Endothelial cell of umbilical vein (primary cell): ENCODE measurements at regions of chr11 and their contacts with region 1.

Region 1: GRCh38 chr11:13955971-13956421 is 6.5 kb upstream of the SPON1 start:
- DNase-seq: peak; percentile 56
- H3K4me3 ChIP-seq: no peak overlapping the region
- H3K27ac ChIP-seq: no peak overlapping the region
- H3K4me1 ChIP-seq: no peaks in the 10 kb centered on the region
- H3K27me3 ChIP-seq: peaks cover 41 to 85% of the 10 kb centered on the region in 2 experiments
- CTCF ChIP-seq: peak; percentile 74 to 85
- POLR2A ChIP-seq: no peak

Region 2: DNA sequence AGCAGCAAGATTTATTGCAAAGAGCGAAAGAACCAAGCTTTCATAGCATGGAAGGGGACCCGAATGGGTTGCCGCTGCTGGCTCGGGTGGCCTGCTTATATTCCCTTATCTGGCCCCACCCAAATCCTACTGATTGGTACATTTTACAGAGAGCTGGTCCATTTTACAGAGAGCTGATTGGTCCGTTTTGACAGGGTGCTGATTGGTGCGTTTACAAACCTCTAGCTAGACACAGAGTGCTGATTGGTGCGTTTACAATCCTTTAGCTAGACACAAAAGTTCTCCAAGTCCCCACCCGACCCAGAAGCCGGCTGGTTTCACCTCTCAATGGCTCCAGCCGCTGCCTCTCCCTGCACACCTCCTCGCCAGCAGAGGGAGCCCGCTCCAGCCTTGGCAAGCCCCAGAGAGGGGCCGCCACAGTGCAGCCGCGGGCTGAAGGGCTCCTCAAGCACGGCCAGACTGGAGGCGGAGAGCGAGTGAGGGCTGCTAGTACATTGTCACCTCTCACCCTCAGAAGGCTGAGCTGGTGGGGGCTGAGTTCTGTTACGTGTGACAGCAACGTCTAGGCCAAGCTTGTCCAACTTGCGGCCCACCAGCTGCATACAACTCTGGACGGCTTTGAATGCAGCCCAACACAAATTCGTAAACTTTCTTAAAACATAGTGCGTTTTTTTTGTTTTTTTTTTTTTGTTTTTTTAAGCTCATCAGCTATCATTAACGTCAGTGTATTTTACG is 468.9 kb before region 1 on chr11:
- CTCF ChIA-PET with region 1: no interaction called
- POLR2A ChIA-PET with region 1: no interaction called
- dilution Hi-C with region 1: no loop called
- intact Hi-C with region 1: loop called (anchors 10 kb)
- DNase-seq: peak; percentile 40
- H3K4me3 ChIP-seq: peak overlapping the region in 1 of 3 experiments; percentile 12
- H3K27ac ChIP-seq: no peak overlapping the region
- H3K4me1 ChIP-seq: no peaks in the 10 kb centered on the region
- H3K27me3 ChIP-seq: peaks cover 6 to 13% of the 10 kb centered on the region in 2 experiments
- CTCF ChIP-seq: peak; percentile 32 to 69
- POLR2A ChIP-seq: no peak

Region 3: GRCh38 chr11:13772223-13773046 is 183.6 kb before region 1 on chr11:
- CTCF ChIA-PET with region 1: interaction called, 8 read pairs
- POLR2A ChIA-PET with region 1: no interaction called
- dilution Hi-C with region 1: no loop called
- intact Hi-C with region 1: loop called (anchors 2 kb)
- DNase-seq: peak; percentile 72
- H3K4me3 ChIP-seq: no peak overlapping the region
- H3K27ac ChIP-seq: no peak overlapping the region
- H3K4me1 ChIP-seq: no peaks in the 10 kb centered on the region
- H3K27me3 ChIP-seq: peaks cover 18 to 21% of the 10 kb centered on the region in 2 experiments
- CTCF ChIP-seq: peak; percentile 25 to 27
- POLR2A ChIP-seq: no peak

Region 4: DNA sequence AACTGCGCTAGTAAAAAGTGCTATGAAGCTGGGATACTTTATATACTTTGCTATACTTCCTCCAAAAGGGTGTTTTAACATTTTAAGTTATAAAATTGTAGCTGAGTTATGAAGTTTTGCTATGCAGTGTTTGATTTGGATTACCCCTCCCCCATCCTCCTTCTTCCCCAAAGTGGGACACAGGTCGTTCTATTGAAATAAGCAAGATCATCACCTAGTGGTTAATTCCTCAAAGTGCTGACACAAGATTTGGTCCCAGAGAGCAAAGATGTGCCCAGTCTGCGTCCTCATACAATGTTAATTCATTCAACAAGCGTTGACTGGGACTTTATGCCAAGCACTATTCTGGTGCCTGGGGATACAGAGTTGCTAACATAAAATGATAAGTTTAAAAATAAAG is 85.0 kb after region 1 on chr11:
- CTCF ChIA-PET with region 1: no interaction called
- POLR2A ChIA-PET with region 1: no interaction called
- dilution Hi-C with region 1: no loop called
- intact Hi-C with region 1: no loop called
- DNase-seq: no peak
- H3K4me3 ChIP-seq: no peak overlapping the region
- H3K27ac ChIP-seq: no peak overlapping the region
- H3K4me1 ChIP-seq: no peaks in the 10 kb centered on the region
- H3K27me3 ChIP-seq: no peaks in the 10 kb centered on the region
- CTCF ChIP-seq: no peak
- POLR2A ChIP-seq: no peak

Region 5: DNA sequence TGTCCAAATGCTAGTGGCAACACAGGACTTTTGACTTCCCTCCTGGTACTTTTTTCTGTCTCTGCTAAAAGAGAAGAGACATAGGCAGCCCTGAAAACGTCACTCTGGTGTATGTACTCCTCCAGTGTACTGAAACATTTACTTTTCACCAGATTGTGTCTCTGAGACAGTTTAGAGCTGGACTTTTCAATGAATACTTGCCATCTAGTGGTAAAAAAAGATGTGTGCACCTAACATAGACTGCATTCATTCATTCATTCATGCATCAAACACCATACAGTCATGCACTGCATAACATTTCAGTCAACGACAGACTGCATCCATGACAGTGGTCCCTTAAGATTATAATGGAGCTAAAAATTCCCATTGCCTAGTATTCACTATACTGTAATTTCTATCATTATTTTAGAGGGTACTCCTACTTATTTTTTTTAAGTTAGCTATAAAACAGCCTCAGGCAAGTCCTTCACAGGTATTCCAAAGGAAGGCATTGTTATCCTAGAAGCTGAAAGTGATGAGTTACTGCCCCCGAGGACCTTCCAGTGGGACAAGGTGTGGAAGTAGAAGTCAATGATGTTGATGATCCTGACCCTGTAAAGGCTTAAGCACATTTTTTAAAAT is 192.8 kb after region 1 on chr11:
- CTCF ChIA-PET with region 1: interaction called, 48 read pairs
- POLR2A ChIA-PET with region 1: no interaction called
- dilution Hi-C with region 1: no loop called
- intact Hi-C with region 1: loop called (anchors 1 kb)
- DNase-seq: peak; percentile 36
- H3K4me3 ChIP-seq: no peak overlapping the region
- H3K27ac ChIP-seq: no peak overlapping the region
- H3K4me1 ChIP-seq: no peaks in the 10 kb centered on the region
- H3K27me3 ChIP-seq: peaks cover 0 to under 1% of the 10 kb centered on the region in 2 experiments
- CTCF ChIP-seq: peak; percentile 21 to 38
- POLR2A ChIP-seq: no peak